Dorsolateral prefrontal cortex (tissue), 120 donors: ENCODE measurements at regions of chr7 and their contacts with region 1.

Region 1: DNA sequence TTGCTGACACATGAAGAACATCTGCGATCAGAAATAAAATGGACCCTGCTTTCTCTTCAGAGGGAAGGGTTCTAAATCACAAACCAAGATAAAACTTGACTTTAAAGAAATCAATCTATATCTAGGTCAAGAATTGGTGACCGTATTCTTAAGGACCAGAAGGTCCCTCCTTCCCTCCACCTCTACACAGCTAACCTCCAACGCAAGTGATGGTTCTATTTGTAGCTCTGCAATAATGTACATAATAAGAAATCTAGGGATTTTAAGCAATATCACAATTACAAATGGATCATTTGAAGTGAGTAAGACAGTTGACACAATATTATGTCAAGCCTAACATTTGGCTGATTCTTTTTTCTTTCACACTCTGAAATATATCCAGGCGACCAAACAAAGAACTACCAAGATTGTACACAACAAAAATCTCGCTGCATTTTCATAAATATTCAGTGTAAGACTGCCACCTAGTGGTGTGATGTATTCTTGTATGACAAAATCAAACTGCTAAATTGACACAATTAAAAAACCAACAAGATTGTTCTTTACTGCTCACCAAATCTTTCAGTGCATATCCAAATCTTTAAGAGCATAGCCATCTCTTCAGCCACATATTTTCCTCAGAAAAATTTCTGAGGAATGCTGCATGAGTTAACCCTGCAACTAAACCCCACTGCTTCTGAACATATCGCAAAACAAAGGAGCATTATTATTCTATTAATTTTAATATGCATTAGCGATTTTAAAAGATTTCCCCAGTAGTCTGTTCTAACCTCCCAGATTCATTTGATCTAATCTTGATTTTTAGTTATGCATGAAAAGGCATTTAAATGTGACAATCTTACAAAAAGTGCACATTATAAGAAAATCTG is 44.5 kb downstream of the ICA1 start:
- DNase-seq: no peak
- H3K4me3 ChIP-seq: peak overlapping the region in 27 of 59 donors; percentile 1 to 41 (median 16)
- H3K27ac ChIP-seq: peak overlapping the region in 29 of 59 donors; percentile 2 to 79 (median 34)
- H3K27me3 ChIP-seq: no peaks in the 10 kb centered on the region
- CTCF ChIP-seq: peak; percentile 77 to 100 (median 89)

Region 2: DNA sequence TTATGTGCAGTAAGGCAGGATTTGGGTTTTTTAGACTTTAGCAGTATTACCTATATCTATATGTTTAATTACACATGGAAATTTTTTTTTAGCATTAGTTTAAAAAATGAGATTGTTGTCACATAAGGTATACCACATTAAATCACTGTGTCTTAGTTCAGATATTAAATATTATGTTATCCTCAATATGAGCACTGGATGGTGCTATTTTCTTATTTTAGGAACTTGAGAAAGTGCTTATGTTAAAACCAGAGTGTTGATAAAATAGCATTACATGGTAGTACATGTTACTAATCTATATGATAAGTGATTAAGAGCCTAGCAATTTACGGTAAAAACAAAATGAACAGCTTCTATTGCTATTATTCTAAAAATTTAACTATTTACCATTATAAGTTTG is 622.0 kb before region 1 on chr7:
- intact Hi-C with region 1: loop called in 1 of 2 experiments (anchors 2 kb)
- DNase-seq: no peak
- H3K4me3 ChIP-seq: no peak overlapping the region
- H3K27ac ChIP-seq: no peak overlapping the region
- H3K27me3 ChIP-seq: no peaks in the 10 kb centered on the region
- CTCF ChIP-seq: peak in 55 of 56 donors; percentile 14 to 70 (median 46)

Region 3: DNA sequence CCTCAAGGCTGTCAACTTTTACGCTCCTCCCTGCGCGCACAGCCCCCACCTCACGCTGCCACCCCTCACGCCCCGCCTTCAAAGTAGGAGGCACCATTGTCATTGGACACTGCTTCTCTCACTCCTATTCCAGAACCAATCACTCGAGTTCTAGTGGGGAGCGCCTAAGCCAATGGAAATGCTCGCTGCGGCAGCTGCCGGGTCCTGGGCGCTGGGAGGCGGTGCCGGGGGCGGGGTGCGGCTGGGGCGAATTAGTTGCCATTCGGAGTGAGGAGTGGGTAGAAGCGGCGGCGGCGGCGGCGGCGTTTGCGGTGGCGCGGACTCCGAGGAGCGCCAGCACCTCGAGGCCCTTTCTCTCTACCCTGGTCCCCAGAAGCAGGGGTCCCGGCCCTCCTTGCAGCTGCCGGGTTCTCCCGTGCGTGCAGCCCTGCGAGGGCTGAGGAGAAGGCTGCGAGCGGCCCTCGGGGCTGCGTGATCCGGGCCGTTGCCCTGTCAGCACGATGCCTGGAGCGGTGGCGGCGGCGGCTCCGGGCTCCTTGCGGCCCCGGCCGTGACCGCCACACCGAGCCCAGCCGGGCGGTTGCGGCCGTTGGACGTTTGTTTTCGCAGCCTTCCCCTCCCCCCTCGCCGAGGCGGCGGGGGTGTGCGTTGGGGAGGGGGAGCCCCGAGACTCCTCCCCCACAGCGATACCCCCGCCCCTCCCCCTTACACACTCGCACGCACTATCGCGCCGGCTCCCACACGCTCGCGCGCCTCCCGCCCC is 248.7 kb before region 1 on chr7 and contains the start of gene GLCCI1:
- intact Hi-C with region 1: no loop called
- DNase-seq: peak; percentile 94 to 99 (median 98)
- H3K4me3 ChIP-seq: peak within 1 kb of the TSS; percentile 77 to 100 (median 96)
- H3K27ac ChIP-seq: peak within 1 kb of the TSS; percentile 90 to 100 (median 100)
- H3K27me3 ChIP-seq: no peaks in the 10 kb centered on the region
- CTCF ChIP-seq: peak in 14 of 56 donors; percentile 9 to 41 (median 19)
- total RNA-seq, gene GLCCI1: 61.6 to 198 (median 112) TPM

Region 4: GRCh38 chr7:8109196-8110022 is 108.0 kb before region 1 on chr7:
- intact Hi-C with region 1: no loop called
- DNase-seq: no peak
- H3K4me3 ChIP-seq: no peak overlapping the region
- H3K27ac ChIP-seq: peak overlapping the region in 1 of 59 donors; percentile 54
- H3K27me3 ChIP-seq: no peaks in the 10 kb centered on the region
- CTCF ChIP-seq: no peak

Region 5: GRCh38 chr7:8295638-8296361 is 78.4 kb after region 1 on chr7:
- intact Hi-C with region 1: loop called in 1 of 2 experiments (anchors 10 kb)
- DNase-seq: peak in 2 of 10 donors; percentile 26 to 49
- H3K4me3 ChIP-seq: no peak overlapping the region
- H3K27ac ChIP-seq: no peak overlapping the region
- H3K27me3 ChIP-seq: no peaks in the 10 kb centered on the region
- CTCF ChIP-seq: peak; percentile 56 to 94 (median 86)